ENCODE measurements at regions of chrX and their contacts with region 1.

Region 1: DNA sequence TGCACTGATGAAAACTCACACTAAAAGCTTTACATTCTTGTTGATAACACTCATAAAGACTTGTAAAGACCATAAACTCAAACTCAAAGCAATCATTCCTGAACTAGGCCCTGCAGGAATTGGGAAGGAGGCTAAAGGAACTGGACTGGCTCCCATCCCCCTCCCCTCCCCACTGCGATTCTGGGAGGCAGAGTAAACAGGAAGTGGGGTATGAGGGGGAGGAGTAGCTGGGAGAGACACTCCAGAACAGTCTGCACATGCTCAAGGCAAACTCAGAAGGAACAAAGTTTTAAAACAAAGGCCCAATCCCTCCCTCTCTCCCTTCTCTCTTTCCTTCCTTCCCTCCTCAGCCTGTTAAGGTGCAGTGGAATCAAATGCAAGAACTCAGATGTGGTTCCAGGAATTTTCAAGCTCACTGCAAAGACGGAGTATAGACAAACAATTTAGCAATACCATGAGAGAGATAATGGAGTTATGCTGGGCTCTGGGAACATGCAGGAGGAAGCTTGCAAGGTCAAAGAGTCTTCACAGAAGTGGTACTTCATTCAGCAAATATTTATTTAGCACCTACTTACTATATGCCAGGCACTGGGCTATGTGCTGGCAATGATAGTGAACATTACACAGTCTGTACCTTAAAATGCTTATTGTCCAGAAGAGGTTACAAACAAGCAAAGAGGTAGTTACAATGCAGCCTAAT is 15.9 kb downstream of the MID1IP1 start:
- DNase-seq: peak; percentile 19
- H3K4me3 Mint-ChIP-seq: no peak overlapping the region
- H3K27ac Mint-ChIP-seq: no peak overlapping the region
- H3K4me1 Mint-ChIP-seq: peaks cover 10% of the 10 kb centered on the region
- H3K27me3 Mint-ChIP-seq: no peaks in the 10 kb centered on the region

Region 2: GRCh38 chrX:38717871-38718270 is 99.3 kb before region 1 on chrX:
- CTCF ChIA-PET with region 1: no interaction called
- POLR2A ChIA-PET with region 1: no interaction called
- DNase-seq: no peak
- H3K4me3 Mint-ChIP-seq: no peak overlapping the region
- H3K27ac Mint-ChIP-seq: no peak overlapping the region
- H3K4me1 Mint-ChIP-seq: no peaks in the 10 kb centered on the region
- H3K27me3 Mint-ChIP-seq: peaks cover 5% of the 10 kb centered on the region

Region 3: GRCh38 chrX:38803586-38804431 is 13.3 kb before region 1 on chrX:
- CTCF ChIA-PET with region 1: no interaction called
- POLR2A ChIA-PET with region 1: interaction called, 26 read pairs
- DNase-seq: peak; percentile 80
- H3K4me3 Mint-ChIP-seq: peak overlapping the region; percentile 87
- H3K27ac Mint-ChIP-seq: peak overlapping the region; percentile 95
- H3K4me1 Mint-ChIP-seq: peaks cover 21% of the 10 kb centered on the region
- H3K27me3 Mint-ChIP-seq: no peaks in the 10 kb centered on the region

Region 4: DNA sequence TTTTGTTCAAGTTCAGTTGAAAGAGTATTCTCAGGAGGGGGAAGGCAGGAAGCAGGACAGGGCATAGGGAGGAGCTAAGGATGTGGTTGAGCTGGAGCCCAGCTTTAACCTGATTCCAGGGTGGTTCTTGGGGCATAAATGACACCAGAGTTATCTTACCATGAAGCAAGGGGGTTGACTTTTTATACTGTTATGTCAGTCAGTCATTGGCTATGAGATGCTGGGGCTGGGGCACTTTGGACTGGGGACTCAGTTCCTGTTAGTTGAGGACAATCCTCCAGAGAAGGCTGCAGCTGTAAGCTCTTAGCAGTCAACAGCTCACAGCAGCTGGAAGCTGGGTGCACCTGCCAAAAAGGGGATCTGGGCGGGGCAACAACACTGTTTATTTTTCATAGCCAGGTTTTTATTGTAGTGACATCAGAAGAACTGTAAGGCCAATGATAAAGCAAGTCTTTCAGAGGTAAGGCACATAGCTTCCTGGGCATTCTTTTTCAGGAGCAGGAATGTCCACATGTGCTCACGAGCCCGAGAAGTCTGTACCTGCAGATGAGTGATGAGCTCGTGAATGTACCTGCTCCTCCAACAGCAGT is 62.6 kb after region 1 on chrX:
- CTCF ChIA-PET with region 1: no interaction called
- POLR2A ChIA-PET with region 1: no interaction called
- DNase-seq: no peak
- H3K4me3 Mint-ChIP-seq: no peak overlapping the region
- H3K27ac Mint-ChIP-seq: no peak overlapping the region
- H3K4me1 Mint-ChIP-seq: peaks cover 9% of the 10 kb centered on the region
- H3K27me3 Mint-ChIP-seq: no peaks in the 10 kb centered on the region

Measured in activated CD4-positive, alpha-beta memory T cell treated with anti-CD3 and anti-CD28 coated beads, Interleukin-2, amount 10 ng/mL, durations not matched to agents 7 days and 5 days (primary cell).